Transverse colon (tissue), 4 donors: ENCODE measurements at regions of chr13 and their contacts with region 1.

Region 1: GRCh38 chr13:35789335-35790165 is 313.1 kb upstream of the MAB21L1 start:
- DNase-seq: no peak
- H3K4me3 ChIP-seq: no peak overlapping the region
- H3K27ac ChIP-seq: no peak overlapping the region
- H3K4me1 ChIP-seq: peaks cover 0 to 25% (median 5%) of the 10 kb centered on the region in 4 donors
- H3K27me3 ChIP-seq: no peaks in the 10 kb centered on the region
- CTCF ChIP-seq: peak; percentile 11 to 51 (median 23)
- EP300 ChIP-seq: no peak
- POLR2A ChIP-seq: no peak

Region 2: GRCh38 chr13:35836446-35836845 is 46.9 kb after region 1 on chr13:
- in situ Hi-C with region 1: no loop called
- intact Hi-C with region 1: loop called (anchors 2 kb)
- DNase-seq: no peak
- H3K4me3 ChIP-seq: no peak overlapping the region
- H3K27ac ChIP-seq: no peak overlapping the region
- H3K4me1 ChIP-seq: no peaks in the 10 kb centered on the region
- H3K27me3 ChIP-seq: no peaks in the 10 kb centered on the region
- CTCF ChIP-seq: no peak
- EP300 ChIP-seq: no peak
- POLR2A ChIP-seq: no peak